ENCODE measurements at regions of chr3 and their contacts with region 1.

Region 1: GRCh38 chr3:46368569-46368968 is 2.2 kb upstream of the CCR5 start:
- DNase-seq: peak; percentile 52 to 86
- ATAC-seq: peak; percentile 89 to 94 (median 92)
- H3K4me3 ChIP-seq: no peak overlapping the region
- H3K4me3 Mint-ChIP-seq: no peak overlapping the region
- H3K27ac ChIP-seq: peak overlapping the region; percentile 60
- H3K27ac Mint-ChIP-seq: peak overlapping the region in 1 of 2 donors; percentile 69
- H3K4me1 ChIP-seq: peaks cover 45% of the 10 kb centered on the region
- H3K4me1 Mint-ChIP-seq: peaks cover 30 to 44% of the 10 kb centered on the region in 2 donors
- H3K27me3 ChIP-seq: no peaks in the 10 kb centered on the region
- H3K27me3 Mint-ChIP-seq: peaks cover 0 to 5% of the 10 kb centered on the region in 2 donors
- CTCF ChIP-seq: peak; percentile 65

Region 2: GRCh38 chr3:46214751-46215352 is 153.7 kb before region 1 on chr3:
- intact Hi-C with region 1: loop called (anchors 1 kb)
- DNase-seq: peak in 1 of 2 donors; percentile 27
- ATAC-seq: peak in 2 of 3 donors; percentile 40 to 45
- H3K4me3 ChIP-seq: no peak overlapping the region
- H3K4me3 Mint-ChIP-seq: no peak overlapping the region
- H3K27ac ChIP-seq: no peak overlapping the region
- H3K27ac Mint-ChIP-seq: no peak overlapping the region
- H3K4me1 ChIP-seq: peaks cover 31% of the 10 kb centered on the region
- H3K4me1 Mint-ChIP-seq: peaks cover 0 to 7% of the 10 kb centered on the region in 2 donors
- H3K27me3 ChIP-seq: no peaks in the 10 kb centered on the region
- H3K27me3 Mint-ChIP-seq: no peaks in the 10 kb centered on the region
- CTCF ChIP-seq: no peak

Region 3: DNA sequence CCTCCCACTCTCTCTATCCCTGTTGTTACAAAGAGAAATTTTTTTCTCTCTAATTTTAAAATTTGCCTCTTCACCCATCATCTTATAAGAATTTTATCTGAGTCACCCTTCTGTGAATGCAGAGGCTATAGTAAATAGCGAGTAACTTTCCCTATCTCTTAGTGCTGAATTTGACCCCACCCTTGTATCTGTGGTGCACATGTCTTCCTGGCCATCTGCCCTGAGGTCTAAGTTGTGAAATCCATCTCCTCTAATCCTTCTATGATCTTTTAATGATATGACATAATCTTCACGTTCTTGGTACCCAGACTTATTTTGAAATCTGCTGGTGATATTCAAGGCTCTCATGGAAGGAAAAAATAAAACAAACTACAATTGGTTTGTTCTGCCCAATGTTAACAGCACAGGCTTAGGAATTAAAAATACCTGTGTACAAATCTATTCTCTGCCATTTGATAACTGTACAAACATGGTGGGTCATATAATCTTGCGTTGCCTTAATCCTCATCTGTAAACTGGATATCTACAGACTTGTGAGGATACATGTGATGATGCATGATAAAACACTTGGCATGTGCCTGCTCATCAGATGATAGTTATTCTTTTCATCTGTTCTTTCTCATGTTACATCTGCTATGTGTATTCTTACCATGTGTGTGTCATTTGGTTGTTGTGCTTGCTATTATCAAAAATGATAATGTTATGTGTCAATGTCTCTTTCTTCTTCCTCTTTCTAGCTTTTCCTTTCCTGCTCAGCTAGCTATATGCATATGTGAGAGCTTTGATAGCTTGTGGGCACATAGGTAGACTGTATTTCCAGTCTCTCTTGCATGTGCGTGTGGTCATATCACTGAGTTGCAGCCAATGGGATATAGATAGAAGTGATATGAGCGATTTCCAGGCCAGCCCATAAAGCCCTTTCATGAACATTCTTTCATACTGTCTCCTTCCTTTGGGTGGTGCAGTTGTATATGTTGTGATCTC is 140.0 kb before region 1 on chr3:
- intact Hi-C with region 1: loop called (anchors 5 kb)
- DNase-seq: peak in 1 of 2 donors; percentile 21
- ATAC-seq: peak; percentile 34 to 82 (median 63)
- H3K4me3 ChIP-seq: no peak overlapping the region
- H3K4me3 Mint-ChIP-seq: no peak overlapping the region
- H3K27ac ChIP-seq: no peak overlapping the region
- H3K27ac Mint-ChIP-seq: no peak overlapping the region
- H3K4me1 ChIP-seq: peaks cover 7% of the 10 kb centered on the region
- H3K4me1 Mint-ChIP-seq: peaks cover 15% of the 10 kb centered on the region in 2 donors
- H3K27me3 ChIP-seq: no peaks in the 10 kb centered on the region
- H3K27me3 Mint-ChIP-seq: peaks cover 4 to 8% of the 10 kb centered on the region in 2 donors
- CTCF ChIP-seq: no peak

Region 4: GRCh38 chr3:46321461-46322104 is 47.0 kb before region 1 on chr3:
- intact Hi-C with region 1: no loop called
- DNase-seq: no peak
- ATAC-seq: no peak
- H3K4me3 ChIP-seq: no peak overlapping the region
- H3K4me3 Mint-ChIP-seq: no peak overlapping the region
- H3K27ac ChIP-seq: no peak overlapping the region
- H3K27ac Mint-ChIP-seq: no peak overlapping the region
- H3K4me1 ChIP-seq: peaks cover 17% of the 10 kb centered on the region
- H3K4me1 Mint-ChIP-seq: no peaks in the 10 kb centered on the region
- H3K27me3 ChIP-seq: no peaks in the 10 kb centered on the region
- H3K27me3 Mint-ChIP-seq: peaks cover 0 to 9% of the 10 kb centered on the region in 2 donors
- CTCF ChIP-seq: no peak

Region 5: GRCh38 chr3:46935168-46935858 is 566.7 kb after region 1 on chr3:
- intact Hi-C with region 1: no loop called
- DNase-seq: no peak
- ATAC-seq: no peak
- H3K4me3 ChIP-seq: no peak overlapping the region
- H3K4me3 Mint-ChIP-seq: no peak overlapping the region
- H3K27ac ChIP-seq: no peak overlapping the region
- H3K27ac Mint-ChIP-seq: peak overlapping the region in 1 of 2 donors; percentile 29
- H3K4me1 ChIP-seq: peaks cover 85% of the 10 kb centered on the region
- H3K4me1 Mint-ChIP-seq: peaks cover 66 to 68% of the 10 kb centered on the region in 2 donors
- H3K27me3 ChIP-seq: no peaks in the 10 kb centered on the region
- H3K27me3 Mint-ChIP-seq: no peaks in the 10 kb centered on the region
- CTCF ChIP-seq: no peak

Measured in natural killer cell (primary cell).